ENCODE measurements at regions of chr7 and their contacts with region 1.

Region 1: DNA sequence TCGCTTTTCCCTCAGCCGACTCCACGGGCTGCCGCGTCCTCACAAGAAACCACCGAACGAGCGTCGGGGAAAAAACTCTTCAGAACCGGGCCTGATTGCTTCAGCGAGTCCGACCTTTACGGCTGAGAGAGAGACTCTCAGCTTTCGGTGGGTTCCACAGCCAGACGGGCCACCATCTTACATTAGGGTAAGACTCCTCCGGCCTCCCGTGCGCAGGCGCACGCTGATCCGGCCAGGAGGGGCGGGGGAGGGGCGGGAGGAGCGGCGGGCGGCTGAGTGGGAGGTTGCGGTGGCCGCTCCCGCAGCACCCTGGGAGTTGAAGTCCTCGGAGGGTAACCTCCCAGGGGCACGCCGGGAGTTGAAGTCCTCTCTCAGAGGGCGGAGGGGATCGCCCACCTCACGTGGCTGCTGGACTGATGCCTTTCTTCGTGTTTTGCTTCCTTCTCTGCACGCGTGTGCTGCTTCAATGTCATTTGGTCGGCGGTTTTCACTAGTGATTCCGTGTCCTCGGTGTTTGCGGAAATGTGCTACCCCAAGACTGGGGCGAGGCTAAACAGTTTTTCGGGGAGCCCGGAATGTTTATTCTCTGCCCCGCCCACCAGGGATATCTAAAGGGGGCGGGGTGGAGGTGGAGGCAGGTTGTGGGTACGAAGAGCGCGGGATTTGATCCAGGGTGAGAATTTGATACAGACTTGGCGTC is at the start of gene CNOT4:
- DNase-seq: peak; percentile 99
- ATAC-seq: peak; percentile 93
- H3K4me3 ChIP-seq: peak within 1 kb of the TSS; percentile 70
- H3K27ac ChIP-seq: peak within 1 kb of the TSS; percentile 94
- H3K4me1 ChIP-seq: peaks cover 10 to 11% of the 10 kb centered on the region in 2 experiments; a peak in 4 of 5 replicates
- H3K27me3 ChIP-seq: no peaks in the 10 kb centered on the region
- CTCF ChIP-seq: no peak; a peak in 1 of 6 replicates
- EP300 ChIP-seq: no peak
- POLR2A ChIP-seq: peak; percentile 97
- RAD21 ChIP-seq: no peak; a peak in 1 of 4 replicates
- polyA plus RNA-seq, gene CNOT4: 12.6 to 24.1 TPM

Region 2: GRCh38 chr7:135490783-135491182 is 19.3 kb before region 1 on chr7:
- CTCF ChIA-PET with region 1: no interaction called
- POLR2A ChIA-PET with region 1: no interaction called
- in situ Hi-C with region 1: no loop called
- intact Hi-C with region 1: no loop called
- DNase-seq: peak; percentile 58 to 93 (median 68)
- ATAC-seq: peak; percentile 72
- H3K4me3 ChIP-seq: no peak overlapping the region
- H3K27ac ChIP-seq: peak overlapping the region; percentile 49; the same call in 2 of the 3 replicates
- H3K4me1 ChIP-seq: peaks cover 11 to 22% of the 10 kb centered on the region in 2 experiments
- H3K27me3 ChIP-seq: no peaks in the 10 kb centered on the region
- CTCF ChIP-seq: no peak
- EP300 ChIP-seq: peak; percentile 51
- POLR2A ChIP-seq: no peak
- RAD21 ChIP-seq: 0 out of 4 replicates have a peak, but pooled peaks of 1 of the 2 experiments have one; percentile 13

Region 3: DNA sequence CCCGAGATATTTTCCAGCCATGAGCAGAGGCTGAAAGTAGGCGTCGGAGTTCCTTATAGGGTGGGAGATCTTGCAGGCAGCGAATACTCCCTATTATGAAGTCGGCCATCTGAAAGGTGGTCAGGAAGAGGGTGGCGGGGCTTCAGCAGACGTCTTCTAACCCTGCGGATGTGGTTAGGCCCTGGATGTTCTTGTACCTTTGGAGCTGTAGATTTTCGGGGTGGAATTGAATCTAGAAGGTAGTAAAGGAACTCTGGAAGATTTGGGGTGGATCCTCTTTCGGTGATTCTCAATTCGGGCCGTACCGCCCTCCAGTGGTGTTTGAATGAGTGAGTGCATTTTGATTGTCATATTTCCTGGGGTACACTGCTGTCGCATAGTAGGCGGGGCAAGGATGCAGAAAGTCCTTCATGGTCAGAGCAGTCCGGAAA is 48.3 kb after region 1 on chr7:
- CTCF ChIA-PET with region 1: interaction called, 24 read pairs
- POLR2A ChIA-PET with region 1: interaction called, 5 read pairs
- in situ Hi-C with region 1: loop called (anchors 5 kb)
- intact Hi-C with region 1: loop called (anchors 1 kb)
- DNase-seq: peak; percentile 80 to 94 (median 86)
- ATAC-seq: peak; percentile 90
- H3K4me3 ChIP-seq: peak overlapping the region; percentile 63
- H3K27ac ChIP-seq: peak overlapping the region; percentile 94
- H3K4me1 ChIP-seq: peaks cover 4 to 8% of the 10 kb centered on the region in 2 experiments
- H3K27me3 ChIP-seq: no peaks in the 10 kb centered on the region; a peak in 1 of 5 replicates
- CTCF ChIP-seq: peak; percentile 87 to 94 (median 89)
- EP300 ChIP-seq: no peak; the same call in 1 of the 2 replicates
- POLR2A ChIP-seq: peak; percentile 56
- RAD21 ChIP-seq: peak; percentile 86 to 93

Region 4: DNA sequence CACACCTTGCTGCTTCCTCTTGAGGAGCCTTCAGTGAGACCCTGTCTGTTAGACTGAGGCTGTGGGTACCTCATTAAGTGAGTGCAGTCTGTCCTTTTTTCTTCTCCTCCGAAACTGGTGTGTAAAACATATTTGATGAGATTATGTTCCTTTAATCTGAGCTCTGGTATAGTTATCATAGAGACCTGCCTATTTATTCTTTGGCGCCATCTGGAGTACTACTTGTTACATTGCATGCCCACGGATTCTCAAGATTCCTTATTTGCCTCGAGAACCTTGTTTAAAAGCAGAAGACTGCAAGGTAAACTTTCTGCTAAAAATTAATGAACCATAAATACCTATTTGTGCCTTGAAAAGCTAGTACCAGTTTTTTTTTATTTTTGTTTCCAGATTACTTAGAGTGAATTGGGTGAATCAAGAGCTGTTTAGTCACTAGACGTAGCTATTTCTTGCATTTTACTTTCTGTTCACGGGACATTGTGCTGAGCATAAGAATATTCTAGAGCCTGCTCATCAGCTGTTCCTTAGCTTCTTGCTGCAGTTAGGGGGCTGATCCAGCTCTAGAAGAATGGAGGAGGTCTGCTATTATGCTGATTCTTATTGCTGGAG is 135.3 kb after region 1 on chr7:
- CTCF ChIA-PET with region 1: interaction called, 9 read pairs
- POLR2A ChIA-PET with region 1: no interaction called
- in situ Hi-C with region 1: no loop called
- intact Hi-C with region 1: loop called (anchors 5 kb)
- DNase-seq: peak; percentile 42 to 61 (median 52)
- ATAC-seq: peak; percentile 81
- H3K4me3 ChIP-seq: no peak overlapping the region
- H3K27ac ChIP-seq: no peak overlapping the region
- H3K4me1 ChIP-seq: peaks cover under 1 to 6% of the 10 kb centered on the region in 2 experiments; a peak in 2 of 5 replicates
- H3K27me3 ChIP-seq: no peaks in the 10 kb centered on the region
- CTCF ChIP-seq: peak; percentile 64 to 82 (median 70); a peak in 5 of 6 replicates
- EP300 ChIP-seq: no peak
- POLR2A ChIP-seq: no peak
- RAD21 ChIP-seq: peak; percentile 69 to 72

Region 5: DNA sequence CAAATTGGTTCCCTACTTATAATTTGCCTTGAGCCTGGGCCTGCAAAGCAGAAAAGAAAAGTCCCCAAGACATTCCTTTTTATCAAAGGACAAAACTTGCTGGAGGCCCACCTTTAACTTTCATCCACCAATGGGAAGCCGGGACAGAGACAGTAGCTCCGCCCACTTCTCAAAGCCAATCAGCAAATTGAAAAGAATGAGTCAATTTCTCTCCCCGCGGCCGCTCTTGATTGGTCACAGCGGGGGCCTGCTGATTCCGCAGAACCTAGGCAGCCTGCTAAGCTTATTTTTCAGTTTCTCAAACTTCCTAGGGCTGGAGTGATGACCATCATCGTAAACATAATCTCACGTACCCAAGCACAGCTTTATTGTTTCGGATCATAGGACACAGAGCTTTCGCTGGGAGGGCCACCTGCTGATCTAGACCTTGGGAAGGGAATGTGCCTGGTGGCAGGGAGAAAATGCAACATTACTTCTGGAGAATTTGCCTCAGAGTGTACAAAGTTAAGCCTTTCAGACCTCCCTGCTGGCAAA is 218.2 kb after region 1 on chr7 and contains the start of gene SLC13A4:
- CTCF ChIA-PET with region 1: no interaction called
- POLR2A ChIA-PET with region 1: no interaction called
- in situ Hi-C with region 1: no loop called
- intact Hi-C with region 1: no loop called
- DNase-seq: peak; percentile 88 to 96 (median 95)
- ATAC-seq: peak; percentile 98
- H3K4me3 ChIP-seq: no peak within 1 kb of the TSS; the same call in 1 of the 2 replicates
- H3K27ac ChIP-seq: no peak within 1 kb of the TSS
- H3K4me1 ChIP-seq: peaks cover 8 to 22% of the 10 kb centered on the region in 2 experiments
- H3K27me3 ChIP-seq: peaks cover 22 to 23% of the 10 kb centered on the region in 2 experiments
- CTCF ChIP-seq: no peak
- EP300 ChIP-seq: no peak
- POLR2A ChIP-seq: no peak
- RAD21 ChIP-seq: no peak
- polyA plus RNA-seq, gene SLC13A4: 0.27 to 0.48 TPM

Region 6: GRCh38 chr7:135825406-135825805 is 315.4 kb after region 1 on chr7:
- CTCF ChIA-PET with region 1: no interaction called
- POLR2A ChIA-PET with region 1: no interaction called
- in situ Hi-C with region 1: no loop called
- intact Hi-C with region 1: no loop called
- DNase-seq: peak in 2 of 4 experiments; percentile 55 to 61
- ATAC-seq: peak; percentile 93
- H3K4me3 ChIP-seq: no peak overlapping the region
- H3K27ac ChIP-seq: no peak overlapping the region
- H3K4me1 ChIP-seq: peaks cover 0 to 4% of the 10 kb centered on the region in 2 experiments; a peak in 1 of 5 replicates
- H3K27me3 ChIP-seq: peaks cover 49 to 84% of the 10 kb centered on the region in 2 experiments; a peak in 4 of 5 replicates
- CTCF ChIP-seq: peak; percentile 77 to 98 (median 97)
- EP300 ChIP-seq: no peak
- POLR2A ChIP-seq: no peak
- RAD21 ChIP-seq: peak; percentile 84 to 85

Region 7: GRCh38 chr7:135965602-135966001 is 455.5 kb after region 1 on chr7:
- CTCF ChIA-PET with region 1: no interaction called
- POLR2A ChIA-PET with region 1: no interaction called
- in situ Hi-C with region 1: loop called (anchors 10 kb)
- intact Hi-C with region 1: no loop called
- DNase-seq: no peak
- ATAC-seq: no peak
- H3K4me3 ChIP-seq: no peak overlapping the region
- H3K27ac ChIP-seq: no peak overlapping the region
- H3K4me1 ChIP-seq: peaks cover 0 to 13% of the 10 kb centered on the region in 2 experiments; a peak in 4 of 5 replicates
- H3K27me3 ChIP-seq: no peaks in the 10 kb centered on the region
- CTCF ChIP-seq: no peak
- EP300 ChIP-seq: no peak
- POLR2A ChIP-seq: no peak
- RAD21 ChIP-seq: no peak